OCI-LY7 (cell line): ENCODE measurements at regions of chr14 and their contacts with region 1.

Region 1: DNA sequence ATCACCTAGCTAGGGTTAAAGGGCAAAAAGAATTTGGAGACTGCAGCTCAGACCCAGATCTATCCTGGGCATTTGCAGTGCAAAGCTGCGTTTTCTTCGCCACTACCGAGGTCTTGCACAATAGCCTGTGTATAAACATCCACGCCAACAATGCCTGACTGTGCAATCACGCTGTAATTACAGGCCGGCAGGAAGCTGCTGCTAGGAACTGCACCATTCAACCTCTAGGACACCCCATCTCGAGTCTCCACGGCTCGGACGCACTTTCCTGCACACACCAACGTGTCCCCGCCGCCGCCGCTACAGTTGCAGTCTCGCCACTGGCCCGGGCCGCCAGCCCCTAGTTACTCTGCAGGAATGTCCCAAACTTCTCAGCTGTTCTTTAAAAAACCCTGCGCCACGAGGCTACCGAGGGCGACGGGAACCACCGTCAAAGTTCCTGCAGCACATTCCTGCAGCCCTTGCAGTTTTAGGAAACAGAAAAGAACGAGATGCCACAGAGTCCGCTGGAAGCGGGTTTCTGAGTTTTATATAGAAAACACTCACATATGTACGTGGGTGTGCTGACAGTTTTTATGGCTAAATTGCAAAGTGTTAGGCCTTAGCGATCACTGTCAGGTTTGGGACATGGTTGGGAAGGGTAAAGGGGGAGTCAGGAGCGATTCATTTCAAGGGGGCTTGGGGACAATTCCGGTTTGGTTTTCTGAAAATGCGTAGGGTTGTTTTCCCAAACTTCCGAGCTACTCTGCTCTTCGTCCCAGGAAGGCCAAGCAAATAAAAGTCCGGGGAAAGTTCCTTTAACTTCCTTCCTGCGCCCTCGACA is 65.5 kb upstream of the PTGR2 start:
- DNase-seq: peak; percentile 83
- H3K4me3 ChIP-seq: peak overlapping the region; percentile 72
- H3K27ac ChIP-seq: peak overlapping the region; percentile 80
- H3K4me1 ChIP-seq: peaks cover 61% of the 10 kb centered on the region
- CTCF ChIP-seq: 0 out of 2 replicates have a peak, but pooled peaks have one; percentile 29

Region 2: DNA sequence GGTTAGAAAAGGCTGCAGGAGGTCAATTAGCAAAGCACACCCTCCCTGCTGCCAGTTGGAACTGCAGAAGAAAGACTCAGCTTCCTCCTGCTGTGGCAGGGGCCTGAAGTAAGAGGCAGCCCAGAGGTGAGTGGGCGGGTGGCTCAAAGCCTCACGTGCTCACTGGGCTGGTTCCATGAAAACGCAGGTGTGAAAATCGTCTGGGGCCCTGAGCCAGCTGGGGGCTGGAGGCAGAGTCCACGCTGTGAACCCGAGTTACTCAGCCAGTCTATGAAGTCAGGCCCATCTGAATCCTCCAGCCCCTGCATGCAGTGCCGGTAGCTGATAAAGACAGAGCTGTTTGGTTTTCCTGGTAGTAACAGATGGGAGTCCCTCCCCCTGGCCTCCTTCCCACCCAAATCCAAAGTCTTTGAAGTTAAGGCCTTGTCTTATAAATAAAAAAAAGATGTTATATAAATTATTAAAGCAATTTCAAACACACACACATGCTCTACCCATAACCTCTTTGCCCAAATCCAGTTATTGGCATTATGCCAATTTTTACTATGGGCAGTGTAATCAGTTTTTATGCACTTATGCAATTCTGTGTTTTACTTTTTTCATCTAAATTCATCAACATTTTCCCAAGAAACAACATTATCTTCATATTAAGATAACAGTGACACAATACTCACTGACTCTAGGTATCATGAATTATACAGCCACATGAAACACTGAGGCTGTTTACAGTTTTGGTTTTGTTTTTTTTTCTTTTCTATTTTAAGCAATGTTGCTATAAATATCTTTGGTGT is 14.0 kb before region 1 on chr14:
- CTCF ChIA-PET with region 1: interaction called, 3 read pairs
- POLR2A ChIA-PET with region 1: interaction called, 97 read pairs
- intact Hi-C with region 1: loop called (anchors 2 kb)
- DNase-seq: peak; percentile 95
- H3K4me3 ChIP-seq: peak overlapping the region; percentile 49
- H3K27ac ChIP-seq: peak overlapping the region; percentile 96
- H3K4me1 ChIP-seq: peaks cover 100% of the 10 kb centered on the region
- CTCF ChIP-seq: no peak

Region 3: DNA sequence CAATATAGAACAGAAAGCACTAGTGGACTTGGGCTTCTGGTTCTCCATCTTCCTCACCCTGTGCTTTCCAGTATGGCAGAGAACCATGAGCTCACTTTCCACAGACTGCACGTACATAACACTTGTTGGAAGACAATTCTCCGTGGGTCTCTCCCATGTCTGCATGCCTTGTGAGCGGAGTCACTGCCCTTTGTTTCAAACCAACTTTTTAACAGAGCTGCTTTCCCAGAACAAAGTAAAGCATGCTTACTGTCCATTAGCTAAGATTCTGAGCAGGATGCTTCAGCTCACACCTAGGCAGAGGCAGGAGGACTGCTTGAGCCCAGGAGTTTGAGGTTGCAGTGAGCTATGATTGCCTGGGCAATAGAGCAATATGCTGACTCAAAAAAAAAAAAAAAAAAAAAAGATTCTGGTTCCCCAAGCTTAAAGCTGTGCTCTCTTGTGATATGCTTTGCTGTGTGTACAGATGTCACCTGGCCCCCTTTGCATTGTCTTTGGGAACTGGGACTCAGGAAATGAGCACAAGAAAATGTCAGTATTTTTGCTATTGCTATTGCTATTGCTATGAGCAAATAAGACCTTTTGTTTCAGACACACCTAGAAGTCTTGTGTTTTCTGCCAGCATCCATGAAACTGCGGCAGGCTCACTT is 10.9 kb after region 1 on chr14:
- CTCF ChIA-PET with region 1: interaction called, 5 read pairs
- POLR2A ChIA-PET with region 1: interaction called, 14 read pairs
- intact Hi-C with region 1: no loop called
- DNase-seq: no peak
- H3K4me3 ChIP-seq: no peak overlapping the region
- H3K27ac ChIP-seq: no peak overlapping the region
- H3K4me1 ChIP-seq: peaks cover 8% of the 10 kb centered on the region
- CTCF ChIP-seq: no peak